A549 (cell line): ENCODE measurements at regions of chr1 and their contacts with region 1.

Region 1: GRCh38 chr1:101309334-101310311 is 72.8 kb downstream of the S1PR1 start:
- DNase-seq: peak; percentile 12 to 18
- ATAC-seq: peak; percentile 26 to 78; a peak in 4 of 6 replicates
- H3K4me3 ChIP-seq: no peak overlapping the region
- H3K27ac ChIP-seq: no peak overlapping the region
- H3K4me1 ChIP-seq: no peaks in the 10 kb centered on the region
- CTCF ChIP-seq: peak; percentile 58
- EP300 ChIP-seq: no peak
- POLR2A ChIP-seq: no peak
- RAD21 ChIP-seq: peak; percentile 66 to 70

Region 2: GRCh38 chr1:101323535-101323934 is 13.9 kb after region 1 on chr1:
- CTCF ChIA-PET with region 1: interaction called, 11 read pairs
- POLR2A ChIA-PET with region 1: no interaction called
- DNase-seq: no peak
- ATAC-seq: no peak
- H3K4me3 ChIP-seq: no peak overlapping the region
- H3K27ac ChIP-seq: no peak overlapping the region
- H3K4me1 ChIP-seq: no peaks in the 10 kb centered on the region
- CTCF ChIP-seq: no peak
- EP300 ChIP-seq: no peak
- POLR2A ChIP-seq: no peak
- RAD21 ChIP-seq: no peak

Region 3: GRCh38 chr1:101357444-101357986 is 47.9 kb after region 1 on chr1:
- CTCF ChIA-PET with region 1: interaction called, 19 read pairs
- POLR2A ChIA-PET with region 1: interaction called, 3 read pairs
- DNase-seq: peak; percentile 51 to 59
- ATAC-seq: peak; percentile 90 to 97
- H3K4me3 ChIP-seq: no peak overlapping the region
- H3K27ac ChIP-seq: no peak overlapping the region
- H3K4me1 ChIP-seq: no peaks in the 10 kb centered on the region
- CTCF ChIP-seq: peak; percentile 56
- EP300 ChIP-seq: no peak
- POLR2A ChIP-seq: no peak
- RAD21 ChIP-seq: peak; percentile 42 to 43; a peak in 4 of 5 replicates

Region 4: DNA sequence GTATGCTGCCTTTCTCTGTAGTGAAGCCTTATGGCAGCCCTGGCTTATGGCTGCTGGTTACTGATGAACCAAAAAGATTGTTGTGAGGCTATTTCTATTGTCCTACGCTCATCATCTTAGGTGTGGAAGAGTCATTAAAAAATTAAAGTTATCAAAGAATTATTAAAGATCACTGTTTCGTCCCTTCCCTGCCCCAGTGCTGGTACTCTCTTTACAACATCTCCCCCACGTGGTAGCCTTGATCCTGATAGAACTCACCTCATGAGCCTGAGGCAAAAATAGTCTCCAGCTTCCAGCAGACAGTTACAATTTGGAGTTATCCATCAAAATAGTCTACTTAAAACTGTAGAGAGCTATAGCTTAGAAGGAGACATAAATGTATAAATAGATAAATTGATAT is 128.7 kb after region 1 on chr1:
- CTCF ChIA-PET with region 1: interaction called, 16 read pairs
- POLR2A ChIA-PET with region 1: no interaction called
- DNase-seq: no peak
- ATAC-seq: no peak
- H3K4me3 ChIP-seq: no peak overlapping the region
- H3K27ac ChIP-seq: no peak overlapping the region
- H3K4me1 ChIP-seq: no peaks in the 10 kb centered on the region
- CTCF ChIP-seq: no peak
- EP300 ChIP-seq: no peak
- POLR2A ChIP-seq: no peak
- RAD21 ChIP-seq: peak in 1 of 2 experiments; percentile 19; a peak in 1 of 5 replicates